RWPE1 (cell line): ENCODE measurements at regions of chr10 and their contacts with region 1.

Region 1: GRCh38 chr10:48289501-48290238 is 15.2 kb upstream of the FRMPD2 start:
- DNase-seq: peak; percentile 34
- H3K27ac ChIP-seq: no peak overlapping the region
- CTCF ChIP-seq: peak; percentile 78

Region 2: DNA sequence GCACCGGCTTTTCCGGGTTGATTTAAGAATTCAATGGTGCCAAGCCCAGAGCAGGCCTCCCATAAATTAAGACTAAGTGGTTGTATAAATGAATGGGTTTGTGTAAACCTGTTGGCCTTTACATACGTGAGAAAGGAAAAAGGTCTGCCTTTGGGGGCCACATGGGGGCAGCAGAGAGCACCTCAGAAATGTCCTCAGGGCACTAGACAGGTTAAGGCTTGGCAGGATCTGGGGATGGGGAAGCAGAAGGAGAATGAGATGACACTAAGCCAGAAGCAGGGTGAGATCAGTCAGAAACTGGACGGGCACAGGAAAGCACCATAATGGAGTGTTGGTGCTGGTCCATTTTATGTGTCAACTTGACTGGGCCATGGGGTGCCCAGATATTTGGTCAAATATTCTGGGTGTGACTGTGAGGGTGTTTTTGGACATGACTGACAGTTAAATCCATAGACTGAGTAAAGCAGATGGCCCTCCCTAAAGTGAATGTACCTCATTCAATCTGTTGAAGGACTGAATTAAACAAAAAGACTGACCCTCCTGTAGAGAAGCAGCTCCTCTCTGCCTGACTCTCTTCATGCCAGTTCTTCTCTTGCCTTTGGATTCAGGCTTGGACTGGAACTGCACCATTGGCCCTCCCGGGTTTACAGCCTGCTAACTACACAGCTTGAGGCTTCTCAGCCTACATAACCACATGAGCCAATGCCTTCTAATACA is 74.0 kb before region 1 on chr10:
- CTCF ChIA-PET with region 1: interaction called, 12 read pairs
- POLR2A ChIA-PET with region 1: no interaction called
- DNase-seq: peak; percentile 59
- H3K27ac ChIP-seq: no peak overlapping the region
- CTCF ChIP-seq: peak; percentile 72

Region 3: DNA sequence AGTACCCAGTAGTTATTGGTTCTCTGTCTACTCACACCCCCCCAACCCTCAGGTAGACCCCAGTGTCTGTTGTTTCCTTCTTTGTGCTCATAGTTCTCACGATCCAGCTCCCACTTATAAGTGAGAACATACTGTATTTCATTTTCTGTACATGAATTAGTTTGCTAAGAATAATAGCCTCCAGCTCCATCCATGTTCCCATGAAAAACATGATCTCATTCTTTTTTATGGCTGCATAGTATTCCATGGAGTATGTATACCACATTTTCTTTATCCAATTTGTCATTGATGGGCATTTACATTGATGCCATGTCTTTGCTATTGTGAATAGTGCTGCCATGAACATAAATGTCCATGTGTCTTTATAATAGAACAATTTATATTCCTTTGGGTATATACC is 12.6 kb before region 1 on chr10:
- CTCF ChIA-PET with region 1: no interaction called
- POLR2A ChIA-PET with region 1: no interaction called
- DNase-seq: no peak
- H3K27ac ChIP-seq: no peak overlapping the region
- CTCF ChIP-seq: no peak

Region 4: GRCh38 chr10:48316236-48316635 is 26.6 kb after region 1 on chr10:
- CTCF ChIA-PET with region 1: no interaction called
- POLR2A ChIA-PET with region 1: no interaction called
- DNase-seq: no peak
- H3K27ac ChIP-seq: no peak overlapping the region
- CTCF ChIP-seq: no peak